Caco-2 (cell line): ENCODE measurements at regions of chr11 and their contacts with region 1.

Region 1: DNA sequence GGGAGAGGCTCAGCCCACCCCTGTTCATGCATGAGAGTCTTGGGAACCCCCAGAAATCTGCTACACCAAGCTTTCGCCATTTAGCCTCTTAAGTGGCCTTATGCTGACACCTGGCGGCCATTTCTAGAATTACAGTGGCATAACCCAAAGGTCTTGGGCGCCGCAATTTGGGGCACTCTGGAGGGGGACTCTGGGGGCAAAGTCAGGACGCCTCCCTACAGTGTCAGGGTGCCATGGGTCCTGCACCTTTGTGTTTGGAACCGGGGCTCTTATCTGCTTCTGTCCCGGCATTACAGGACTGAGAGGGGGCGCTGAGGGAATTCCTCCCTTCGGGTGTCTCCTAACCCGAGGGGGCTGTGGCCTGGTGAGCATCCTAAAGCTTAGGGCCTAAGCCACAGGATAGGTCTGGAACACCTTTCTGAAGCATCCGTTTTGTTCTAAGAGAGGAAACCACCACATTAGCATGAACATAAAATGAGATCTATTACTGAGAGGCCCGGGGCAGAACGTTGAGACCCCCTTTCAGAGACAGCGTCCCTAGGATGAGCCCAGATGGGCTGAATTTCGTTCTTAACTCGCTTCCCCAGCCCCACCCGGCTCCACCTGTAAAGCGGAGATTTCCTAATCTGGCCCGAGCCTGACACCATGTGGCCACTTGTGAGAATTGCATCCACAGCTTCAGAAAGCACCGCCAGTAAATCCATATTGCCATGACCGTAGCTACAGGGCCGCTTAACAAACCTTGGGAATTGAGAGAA is 9.3 kb downstream of the INS start:
- DNase-seq: peak; percentile 90 to 92
- H3K4me3 ChIP-seq: no peak overlapping the region
- H3K4me3 Mint-ChIP-seq: peak overlapping the region; percentile 33
- H3K27ac Mint-ChIP-seq: peak overlapping the region; percentile 65
- H3K4me1 ChIP-seq: no peaks in the 10 kb centered on the region; the same call in 1 of the 2 replicates
- H3K4me1 Mint-ChIP-seq: no peaks in the 10 kb centered on the region
- H3K27me3 ChIP-seq: no peaks in the 10 kb centered on the region
- H3K27me3 Mint-ChIP-seq: no peaks in the 10 kb centered on the region
- CTCF ChIP-seq: peak; percentile 93 to 97

Region 2: DNA sequence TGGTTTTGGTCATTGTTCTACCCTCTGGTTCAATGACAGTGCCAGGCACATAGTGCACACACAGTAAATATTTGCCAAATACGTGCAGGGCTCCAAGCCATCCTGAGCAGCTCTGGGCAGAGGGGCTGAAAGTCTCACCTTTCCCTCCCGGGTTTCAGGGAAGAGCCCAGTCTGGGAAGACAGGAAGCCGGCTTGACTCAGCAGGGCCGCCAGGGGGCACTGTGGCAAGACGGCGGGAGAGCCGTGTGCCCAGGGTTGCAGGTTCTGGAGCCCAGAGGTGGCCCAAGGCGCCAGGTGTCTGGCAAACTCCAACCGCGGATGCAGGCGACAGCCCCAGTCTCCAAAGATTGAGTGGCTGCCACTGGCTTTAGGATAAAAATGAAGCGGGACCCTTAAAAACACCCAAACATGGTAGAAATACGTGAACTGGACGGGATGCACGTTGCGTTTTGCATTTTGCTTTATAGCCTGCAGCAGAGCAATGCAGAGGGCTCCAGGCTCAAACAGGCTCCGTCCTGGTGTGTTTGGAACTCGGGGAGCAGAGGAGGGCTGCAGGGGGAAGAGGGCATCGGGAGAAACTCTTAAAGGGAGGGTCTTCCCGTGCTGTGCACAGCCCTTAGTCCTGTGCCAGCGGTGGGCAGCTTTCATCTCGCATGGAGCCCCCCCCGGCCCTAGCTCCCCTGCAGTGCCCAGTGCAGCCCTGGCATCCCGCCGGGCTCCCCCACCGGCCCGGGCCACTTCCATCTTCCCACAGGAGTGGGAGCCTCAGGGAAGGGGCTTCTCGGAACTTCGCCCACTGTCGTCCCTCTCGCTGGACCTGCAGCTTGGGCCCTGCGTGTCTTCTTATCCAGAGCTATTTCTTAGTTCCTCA is 511.4 kb before region 1 on chr11:
- CTCF ChIA-PET with region 1: interaction called, 32 read pairs
- POLR2A ChIA-PET with region 1: no interaction called
- intact Hi-C with region 1: no loop called
- DNase-seq: peak; percentile 14 to 72
- H3K4me3 ChIP-seq: no peak overlapping the region
- H3K4me3 Mint-ChIP-seq: no peak overlapping the region
- H3K27ac Mint-ChIP-seq: no peak overlapping the region
- H3K4me1 ChIP-seq: no peaks in the 10 kb centered on the region
- H3K4me1 Mint-ChIP-seq: no peaks in the 10 kb centered on the region
- H3K27me3 ChIP-seq: no peaks in the 10 kb centered on the region
- H3K27me3 Mint-ChIP-seq: peaks cover 8% of the 10 kb centered on the region
- CTCF ChIP-seq: peak; percentile 81 to 91

Region 3: DNA sequence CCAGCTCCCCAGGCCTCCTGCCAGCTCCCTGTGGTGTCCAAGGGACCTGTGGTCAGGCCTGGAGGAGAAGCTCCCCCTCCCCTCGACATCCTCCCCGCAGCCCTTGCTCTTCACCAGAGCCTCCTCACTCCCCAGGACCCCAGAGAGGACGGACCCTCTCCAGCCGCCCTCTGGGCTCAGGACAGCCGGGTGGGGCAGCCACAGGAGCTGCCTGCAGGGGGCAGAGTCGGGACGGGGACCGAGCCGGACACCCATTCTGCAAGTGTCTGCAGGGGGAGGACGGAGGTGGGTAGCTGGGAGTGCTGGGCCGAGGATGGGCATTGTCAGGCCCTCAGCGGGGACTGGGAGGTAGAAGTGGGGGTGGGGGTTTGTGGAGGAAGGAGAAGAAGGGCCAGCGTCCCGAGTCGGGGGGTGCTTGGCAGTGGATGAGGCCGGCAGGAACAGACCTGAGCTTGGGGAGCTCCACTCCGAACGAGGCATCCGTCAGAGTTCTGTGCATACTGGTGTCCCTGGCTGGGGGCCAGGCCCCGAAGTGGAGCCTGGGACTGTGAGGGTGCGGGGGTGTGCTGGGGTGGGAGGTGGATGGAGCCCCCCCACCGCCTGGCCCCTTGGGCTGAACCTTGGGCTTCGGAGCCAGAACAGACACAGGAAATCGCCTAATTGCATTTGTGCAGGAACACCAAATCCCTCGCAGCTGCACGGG is 275.2 kb before region 1 on chr11:
- CTCF ChIA-PET with region 1: interaction called, 140 read pairs
- POLR2A ChIA-PET with region 1: no interaction called
- intact Hi-C with region 1: no loop called
- DNase-seq: peak in 1 of 2 experiments; percentile 63
- H3K4me3 ChIP-seq: no peak overlapping the region
- H3K4me3 Mint-ChIP-seq: no peak overlapping the region
- H3K27ac Mint-ChIP-seq: no peak overlapping the region
- H3K4me1 ChIP-seq: peaks cover 7% of the 10 kb centered on the region
- H3K4me1 Mint-ChIP-seq: no peaks in the 10 kb centered on the region
- H3K27me3 ChIP-seq: no peaks in the 10 kb centered on the region
- H3K27me3 Mint-ChIP-seq: no peaks in the 10 kb centered on the region
- CTCF ChIP-seq: peak; percentile 61 to 63

Region 4: GRCh38 chr11:1968454-1969002 is 183.2 kb before region 1 on chr11:
- CTCF ChIA-PET with region 1: interaction called, 20 read pairs
- POLR2A ChIA-PET with region 1: interaction called, 3 read pairs
- intact Hi-C with region 1: no loop called
- DNase-seq: no peak
- H3K4me3 ChIP-seq: no peak overlapping the region
- H3K4me3 Mint-ChIP-seq: no peak overlapping the region
- H3K27ac Mint-ChIP-seq: no peak overlapping the region
- H3K4me1 ChIP-seq: no peaks in the 10 kb centered on the region
- H3K4me1 Mint-ChIP-seq: no peaks in the 10 kb centered on the region
- H3K27me3 ChIP-seq: no peaks in the 10 kb centered on the region
- H3K27me3 Mint-ChIP-seq: no peaks in the 10 kb centered on the region
- CTCF ChIP-seq: no peak

Region 5: GRCh38 chr11:2120359-2121100 is 31.1 kb before region 1 on chr11:
- CTCF ChIA-PET with region 1: interaction called, 13 read pairs
- POLR2A ChIA-PET with region 1: no interaction called
- intact Hi-C with region 1: no loop called
- DNase-seq: peak in 1 of 2 experiments; percentile 50
- H3K4me3 ChIP-seq: no peak overlapping the region
- H3K4me3 Mint-ChIP-seq: no peak overlapping the region
- H3K27ac Mint-ChIP-seq: no peak overlapping the region
- H3K4me1 ChIP-seq: peaks cover 29% of the 10 kb centered on the region
- H3K4me1 Mint-ChIP-seq: no peaks in the 10 kb centered on the region
- H3K27me3 ChIP-seq: no peaks in the 10 kb centered on the region
- H3K27me3 Mint-ChIP-seq: no peaks in the 10 kb centered on the region
- CTCF ChIP-seq: no peak

Region 6: DNA sequence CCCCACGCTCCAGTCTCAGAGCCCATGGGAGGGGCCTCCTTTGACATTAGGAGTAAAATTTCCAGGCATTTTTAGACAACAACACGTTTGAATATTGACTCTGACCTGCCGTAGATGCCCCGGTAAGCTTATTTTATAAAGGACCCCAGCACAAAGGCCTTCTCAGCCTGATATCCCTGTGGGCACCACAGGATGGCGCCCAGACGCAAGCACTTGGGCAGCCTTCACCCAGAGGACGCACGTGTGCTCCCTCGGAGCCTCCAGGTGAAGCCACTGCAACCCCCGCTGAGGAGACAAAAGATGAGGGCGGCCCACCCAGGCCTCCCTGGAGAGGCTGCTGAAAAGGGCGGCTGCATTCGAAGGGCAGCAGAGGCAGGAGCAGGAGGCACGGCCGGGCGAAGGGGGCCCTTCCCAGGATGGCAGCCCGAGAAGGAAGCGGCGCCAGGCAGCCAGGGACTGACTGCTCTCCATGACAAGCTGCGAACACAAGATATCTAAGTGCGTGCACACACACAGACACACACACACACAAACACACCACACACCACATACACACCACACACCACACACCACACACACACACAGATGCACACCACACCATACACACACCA is 35.1 kb after region 1 on chr11:
- CTCF ChIA-PET with region 1: interaction called, 55 read pairs
- POLR2A ChIA-PET with region 1: no interaction called
- intact Hi-C with region 1: no loop called
- DNase-seq: peak in 1 of 2 experiments; percentile 71
- H3K4me3 ChIP-seq: no peak overlapping the region
- H3K4me3 Mint-ChIP-seq: no peak overlapping the region
- H3K27ac Mint-ChIP-seq: no peak overlapping the region
- H3K4me1 ChIP-seq: peaks cover 10% of the 10 kb centered on the region; the same call in 1 of the 2 replicates
- H3K4me1 Mint-ChIP-seq: no peaks in the 10 kb centered on the region
- H3K27me3 ChIP-seq: no peaks in the 10 kb centered on the region
- H3K27me3 Mint-ChIP-seq: no peaks in the 10 kb centered on the region
- CTCF ChIP-seq: peak; percentile 69 to 82

Region 7: GRCh38 chr11:2234963-2235362 is 83.3 kb after region 1 on chr11:
- CTCF ChIA-PET with region 1: no interaction called
- POLR2A ChIA-PET with region 1: no interaction called
- intact Hi-C with region 1: no loop called
- DNase-seq: no peak
- H3K4me3 ChIP-seq: no peak overlapping the region
- H3K4me3 Mint-ChIP-seq: no peak overlapping the region
- H3K27ac Mint-ChIP-seq: no peak overlapping the region
- H3K4me1 ChIP-seq: no peaks in the 10 kb centered on the region
- H3K4me1 Mint-ChIP-seq: no peaks in the 10 kb centered on the region
- H3K27me3 ChIP-seq: no peaks in the 10 kb centered on the region
- H3K27me3 Mint-ChIP-seq: no peaks in the 10 kb centered on the region
- CTCF ChIP-seq: no peak

Region 8: DNA sequence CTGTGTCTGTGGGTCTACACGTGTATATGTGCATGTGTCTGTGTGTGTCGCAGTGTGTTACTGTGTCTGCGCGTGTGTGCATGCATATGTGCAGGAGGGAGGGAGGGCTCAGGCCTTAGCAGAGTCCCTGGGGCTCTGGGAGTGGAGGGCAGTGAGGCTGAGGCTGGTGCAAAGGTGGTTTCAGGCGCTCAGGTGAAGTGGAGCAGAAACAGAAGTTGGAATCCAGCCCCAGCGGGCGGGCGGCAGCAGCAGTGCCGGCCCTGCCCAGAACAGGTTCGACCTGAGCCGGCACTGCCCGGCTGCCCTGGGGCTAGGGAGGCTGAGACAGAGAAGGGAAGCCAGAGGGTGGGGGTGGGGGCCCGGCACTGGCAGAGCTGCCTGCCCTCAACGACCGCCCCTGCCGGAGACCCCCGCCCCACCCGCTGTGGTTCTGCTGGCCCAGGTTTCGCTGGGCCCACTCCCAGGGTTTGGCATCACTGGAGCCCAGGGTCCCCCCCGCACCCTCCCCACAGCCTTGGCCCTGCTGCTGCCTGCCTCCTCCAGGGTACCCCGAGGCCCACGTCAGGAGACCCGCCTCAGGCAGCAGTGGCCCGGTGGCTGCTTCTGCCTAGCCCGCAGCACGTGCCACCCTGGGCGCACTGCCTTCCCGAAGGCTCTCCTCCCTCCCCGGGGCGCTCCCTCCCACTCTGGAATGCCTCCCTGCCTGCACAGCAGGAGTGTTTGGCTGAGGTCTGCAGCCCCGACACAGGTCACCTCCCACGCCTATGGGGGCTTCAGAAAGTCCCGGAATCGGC is 105.4 kb after region 1 on chr11:
- CTCF ChIA-PET with region 1: no interaction called
- POLR2A ChIA-PET with region 1: no interaction called
- intact Hi-C with region 1: no loop called
- DNase-seq: peak in 1 of 2 experiments; percentile 55
- H3K4me3 ChIP-seq: no peak overlapping the region
- H3K4me3 Mint-ChIP-seq: no peak overlapping the region
- H3K27ac Mint-ChIP-seq: peak overlapping the region; percentile 16
- H3K4me1 ChIP-seq: no peaks in the 10 kb centered on the region
- H3K4me1 Mint-ChIP-seq: peaks cover 9% of the 10 kb centered on the region
- H3K27me3 ChIP-seq: no peaks in the 10 kb centered on the region
- H3K27me3 Mint-ChIP-seq: no peaks in the 10 kb centered on the region
- CTCF ChIP-seq: no peak

Region 9: GRCh38 chr11:2366261-2366660 is 214.6 kb after region 1 on chr11:
- CTCF ChIA-PET with region 1: no interaction called
- POLR2A ChIA-PET with region 1: no interaction called
- intact Hi-C with region 1: no loop called
- DNase-seq: no peak
- H3K4me3 ChIP-seq: no peak overlapping the region
- H3K4me3 Mint-ChIP-seq: no peak overlapping the region
- H3K27ac Mint-ChIP-seq: no peak overlapping the region
- H3K4me1 ChIP-seq: no peaks in the 10 kb centered on the region
- H3K4me1 Mint-ChIP-seq: no peaks in the 10 kb centered on the region
- H3K27me3 ChIP-seq: no peaks in the 10 kb centered on the region
- H3K27me3 Mint-ChIP-seq: no peaks in the 10 kb centered on the region
- CTCF ChIP-seq: no peak